ENCODE measurements at regions of chr5 and their contacts with region 1.

Region 1: GRCh38 chr5:38193015-38193581 is 65.3 kb upstream of the EGFLAM start:
- DNase-seq: peak; percentile 38
- H3K4me3 ChIP-seq: no peak overlapping the region
- H3K27ac ChIP-seq: no peak overlapping the region
- H3K4me1 ChIP-seq: no peaks in the 10 kb centered on the region
- H3K27me3 ChIP-seq: no peaks in the 10 kb centered on the region
- CTCF ChIP-seq: peak; percentile 90 to 92

Region 2: DNA sequence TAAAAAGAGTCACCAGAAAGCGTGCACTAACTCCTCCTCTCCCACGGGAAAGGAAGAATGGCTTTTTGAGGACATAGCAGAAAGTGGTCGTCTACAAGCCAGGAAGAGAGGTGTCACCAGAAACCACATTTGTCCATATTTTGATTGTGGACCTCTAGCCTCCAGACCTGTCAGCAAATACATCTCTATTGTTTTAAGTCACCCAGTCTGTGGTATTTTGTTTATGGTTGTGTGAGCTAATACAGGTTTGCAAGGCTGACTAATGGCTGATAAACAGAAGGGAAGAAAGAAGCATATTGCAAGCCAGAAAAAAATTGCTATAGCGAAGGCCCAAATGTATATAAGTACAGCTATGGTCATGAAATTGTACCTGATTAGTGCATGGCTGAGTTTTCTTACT is 792.6 kb before region 1 on chr5:
- CTCF ChIA-PET with region 1: no interaction called
- dilution Hi-C with region 1: loop called (anchors 10 kb)
- in situ Hi-C with region 1: loop called (anchors 10 kb)
- intact Hi-C with region 1: no loop called
- DNase-seq: no peak
- H3K4me3 ChIP-seq: no peak overlapping the region
- H3K27ac ChIP-seq: no peak overlapping the region
- H3K4me1 ChIP-seq: no peaks in the 10 kb centered on the region
- H3K27me3 ChIP-seq: no peaks in the 10 kb centered on the region
- CTCF ChIP-seq: no peak

Region 3: DNA sequence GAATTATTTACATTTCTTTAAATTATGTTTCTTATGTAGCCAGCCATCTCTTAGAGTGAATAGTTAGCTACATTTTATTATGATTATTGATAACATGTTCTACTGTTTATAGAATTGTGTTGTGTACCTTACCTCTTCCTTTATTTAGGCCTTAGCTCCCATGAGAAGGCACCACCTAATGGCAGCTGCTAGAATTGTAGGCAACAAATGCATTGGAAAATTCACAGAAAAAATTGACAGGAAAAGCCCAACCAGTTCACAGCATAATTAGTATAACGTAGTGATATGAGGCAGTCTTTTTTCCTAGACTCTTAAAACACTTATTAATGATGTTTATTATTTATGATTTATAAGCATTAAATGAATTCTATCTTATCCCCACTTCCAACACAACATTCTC is 638.2 kb before region 1 on chr5:
- CTCF ChIA-PET with region 1: no interaction called
- dilution Hi-C with region 1: no loop called
- in situ Hi-C with region 1: no loop called
- intact Hi-C with region 1: loop called (anchors 5 kb)
- DNase-seq: peak; percentile 34
- H3K4me3 ChIP-seq: no peak overlapping the region
- H3K27ac ChIP-seq: no peak overlapping the region
- H3K4me1 ChIP-seq: no peaks in the 10 kb centered on the region
- H3K27me3 ChIP-seq: no peaks in the 10 kb centered on the region
- CTCF ChIP-seq: peak; percentile 61 to 73

Region 4: GRCh38 chr5:37859805-37860204 is 333.3 kb before region 1 on chr5:
- CTCF ChIA-PET with region 1: no interaction called
- dilution Hi-C with region 1: no loop called
- in situ Hi-C with region 1: no loop called
- intact Hi-C with region 1: loop called (anchors 1 kb)
- DNase-seq: no peak
- H3K4me3 ChIP-seq: no peak overlapping the region
- H3K27ac ChIP-seq: no peak overlapping the region
- H3K4me1 ChIP-seq: no peaks in the 10 kb centered on the region
- H3K27me3 ChIP-seq: no peaks in the 10 kb centered on the region
- CTCF ChIP-seq: no peak

Region 5: DNA sequence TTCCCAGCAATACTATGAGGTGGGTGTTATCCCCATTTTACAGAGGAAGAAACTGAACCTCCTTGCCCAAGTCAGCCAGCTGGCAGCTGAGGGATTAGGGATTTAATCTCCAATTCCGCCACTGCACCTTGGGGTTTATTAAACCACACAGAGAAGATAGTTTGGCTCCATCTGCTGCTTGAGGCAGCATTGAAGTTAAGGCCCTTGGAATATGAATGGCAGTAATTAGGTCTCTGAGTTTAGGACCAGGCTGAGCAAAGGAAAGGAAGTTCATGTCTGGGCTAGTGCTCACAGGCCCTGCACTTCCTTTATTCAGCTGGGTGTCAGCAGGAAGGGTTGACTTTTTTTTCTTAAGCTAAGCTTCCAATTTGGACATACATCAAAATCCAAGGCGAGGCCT is 266.4 kb before region 1 on chr5:
- CTCF ChIA-PET with region 1: no interaction called
- dilution Hi-C with region 1: no loop called
- in situ Hi-C with region 1: no loop called
- intact Hi-C with region 1: loop called (anchors 1 kb)
- DNase-seq: peak; percentile 74
- H3K4me3 ChIP-seq: no peak overlapping the region
- H3K27ac ChIP-seq: no peak overlapping the region
- H3K4me1 ChIP-seq: peaks cover 10% of the 10 kb centered on the region
- H3K27me3 ChIP-seq: no peaks in the 10 kb centered on the region
- CTCF ChIP-seq: peak in 1 of 2 donors; percentile 47

Measured in mammary epithelial cell (primary cell).